Activated CD8-positive, alpha-beta T cell treated with anti-CD3 and anti-CD28 coated beads, Interleukin-2, amount 10 ng/mL, durations not matched to agents 7 days and 5 days (primary cell): ENCODE measurements at regions of chr4 and their contacts with region 1.

Region 1: DNA sequence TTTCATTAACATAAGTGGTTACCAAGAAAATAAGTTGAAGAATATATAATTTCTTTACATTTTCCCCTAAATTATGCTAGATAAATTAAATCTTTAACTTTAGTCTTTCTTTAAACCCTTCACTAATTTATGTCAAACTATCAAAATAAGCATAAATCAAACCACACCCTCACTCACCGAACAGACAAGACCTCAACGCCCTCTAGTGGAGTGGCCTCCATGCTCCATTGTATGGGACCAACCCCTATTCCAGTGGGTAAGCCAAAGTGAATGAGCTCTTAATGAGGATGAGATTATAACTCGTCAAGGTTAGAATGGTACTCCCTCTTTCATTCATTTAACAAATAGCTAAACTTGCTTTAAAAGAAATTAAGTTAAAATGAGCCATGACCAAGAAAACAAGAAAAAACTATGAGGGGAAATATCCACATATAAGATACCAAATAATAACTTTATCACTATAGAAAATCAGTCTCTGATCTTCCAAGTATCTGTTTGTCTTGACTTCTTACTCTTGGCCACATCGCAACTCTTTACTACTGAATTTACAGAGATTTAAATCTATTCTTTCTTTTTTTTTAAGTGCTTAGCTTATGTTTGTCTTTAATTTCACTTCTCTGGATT is 15.6 kb upstream of the BBS12 start:
- DNase-seq: peak; percentile 79
- ATAC-seq: peak; percentile 96
- H3K4me3 Mint-ChIP-seq: no peak overlapping the region
- H3K27ac Mint-ChIP-seq: no peak overlapping the region
- H3K4me1 Mint-ChIP-seq: peaks cover 18% of the 10 kb centered on the region
- H3K27me3 Mint-ChIP-seq: peaks cover 3% of the 10 kb centered on the region

Region 2: DNA sequence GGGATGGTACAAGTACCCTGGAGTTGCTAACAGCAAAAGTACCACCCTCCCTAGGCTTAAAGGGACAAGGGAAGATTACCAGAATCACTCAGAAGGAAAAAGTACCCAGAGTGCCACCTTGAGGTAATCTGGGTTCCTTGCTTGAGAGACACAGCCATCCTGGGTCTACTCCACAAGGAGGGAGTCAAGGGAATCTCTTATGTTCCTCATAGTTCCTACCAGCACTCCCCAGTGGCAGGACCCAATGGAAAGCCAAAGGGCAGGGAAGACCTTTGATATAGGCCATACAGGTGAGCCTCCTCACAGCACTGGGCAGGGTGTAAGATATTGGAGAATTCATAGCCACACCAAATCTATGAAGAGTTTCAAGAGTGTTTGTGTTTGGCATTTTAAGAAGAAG is 266.1 kb before region 1 on chr4:
- CTCF ChIA-PET with region 1: no interaction called
- POLR2A ChIA-PET with region 1: no interaction called
- DNase-seq: peak; percentile 26
- ATAC-seq: peak; percentile 61
- H3K4me3 Mint-ChIP-seq: no peak overlapping the region
- H3K27ac Mint-ChIP-seq: no peak overlapping the region
- H3K4me1 Mint-ChIP-seq: peaks cover 17% of the 10 kb centered on the region
- H3K27me3 Mint-ChIP-seq: peaks cover 6% of the 10 kb centered on the region

Region 3: GRCh38 chr4:122602277-122603142 is 114.4 kb before region 1 on chr4:
- CTCF ChIA-PET with region 1: interaction called, 41 read pairs
- POLR2A ChIA-PET with region 1: no interaction called
- DNase-seq: no peak
- ATAC-seq: peak; percentile 60
- H3K4me3 Mint-ChIP-seq: no peak overlapping the region
- H3K27ac Mint-ChIP-seq: no peak overlapping the region
- H3K4me1 Mint-ChIP-seq: peaks cover 4% of the 10 kb centered on the region
- H3K27me3 Mint-ChIP-seq: peaks cover 26% of the 10 kb centered on the region

Region 4: DNA sequence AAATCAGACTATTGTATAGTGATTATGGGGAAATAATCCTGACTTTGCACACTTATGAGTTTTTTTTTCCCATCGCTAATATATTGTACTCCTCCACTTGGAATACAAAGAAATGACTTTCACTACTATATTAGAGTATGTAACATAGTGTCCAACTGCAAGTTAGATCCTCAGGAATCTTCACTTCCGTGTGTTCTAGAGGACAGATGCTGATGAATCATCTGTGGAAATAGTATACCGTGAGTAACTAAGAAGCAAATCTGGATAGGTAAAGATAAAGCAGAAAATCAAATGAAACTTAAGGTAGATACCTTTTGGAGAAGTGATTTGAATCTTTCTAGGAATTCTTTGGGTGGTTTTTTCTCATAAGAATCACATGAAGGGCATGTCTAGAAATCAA is 104.4 kb before region 1 on chr4:
- CTCF ChIA-PET with region 1: interaction called, 13 read pairs
- POLR2A ChIA-PET with region 1: no interaction called
- DNase-seq: no peak
- ATAC-seq: no peak
- H3K4me3 Mint-ChIP-seq: no peak overlapping the region
- H3K27ac Mint-ChIP-seq: no peak overlapping the region
- H3K4me1 Mint-ChIP-seq: peaks cover 2% of the 10 kb centered on the region
- H3K27me3 Mint-ChIP-seq: peaks cover 2% of the 10 kb centered on the region

Region 5: GRCh38 chr4:122665161-122665929 is 51.6 kb before region 1 on chr4:
- CTCF ChIA-PET with region 1: interaction called, 10 read pairs
- POLR2A ChIA-PET with region 1: no interaction called
- DNase-seq: no peak
- ATAC-seq: no peak
- H3K4me3 Mint-ChIP-seq: no peak overlapping the region
- H3K27ac Mint-ChIP-seq: no peak overlapping the region
- H3K4me1 Mint-ChIP-seq: peaks cover 28% of the 10 kb centered on the region
- H3K27me3 Mint-ChIP-seq: no peaks in the 10 kb centered on the region

Region 6: DNA sequence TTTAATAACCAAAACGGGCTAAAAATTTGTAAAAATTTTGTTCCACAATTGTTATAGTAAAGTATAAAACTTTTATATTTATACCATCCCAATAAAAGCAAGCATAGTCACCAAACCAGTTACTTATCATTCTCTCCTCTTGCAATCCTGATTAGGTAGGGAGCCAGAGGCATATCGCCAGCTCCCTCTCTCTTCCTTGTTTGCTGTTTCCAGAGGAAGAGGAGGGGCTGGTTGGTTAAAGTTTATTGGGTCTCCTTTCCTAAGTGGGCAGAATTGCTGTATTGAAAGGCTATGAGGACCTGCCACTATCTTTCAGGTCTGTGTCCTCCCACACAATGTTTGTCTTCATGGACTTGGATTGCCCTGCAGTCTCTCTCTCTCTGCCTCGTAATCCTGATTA is 14.0 kb before region 1 on chr4:
- CTCF ChIA-PET with region 1: interaction called, 11 read pairs
- POLR2A ChIA-PET with region 1: no interaction called
- DNase-seq: no peak
- ATAC-seq: no peak
- H3K4me3 Mint-ChIP-seq: no peak overlapping the region
- H3K27ac Mint-ChIP-seq: no peak overlapping the region
- H3K4me1 Mint-ChIP-seq: no peaks in the 10 kb centered on the region
- H3K27me3 Mint-ChIP-seq: peaks cover 2% of the 10 kb centered on the region